Activated CD8-positive, alpha-beta T cell treated with anti-CD3 and anti-CD28 coated beads for 36 hours (primary cell): ENCODE measurements at regions of chr7 and their contacts with region 1.

Region 1: GRCh38 chr7:73606801-73607691 is 17.3 kb downstream of the MLXIPL start:
- DNase-seq: peak; percentile 74
- ATAC-seq: peak; percentile 94
- H3K4me3 Mint-ChIP-seq: no peak overlapping the region
- H3K27ac Mint-ChIP-seq: no peak overlapping the region
- H3K4me1 Mint-ChIP-seq: no peaks in the 10 kb centered on the region
- H3K27me3 Mint-ChIP-seq: peaks cover 25% of the 10 kb centered on the region
- CTCF ChIP-seq: peak; percentile 96

Region 2: DNA sequence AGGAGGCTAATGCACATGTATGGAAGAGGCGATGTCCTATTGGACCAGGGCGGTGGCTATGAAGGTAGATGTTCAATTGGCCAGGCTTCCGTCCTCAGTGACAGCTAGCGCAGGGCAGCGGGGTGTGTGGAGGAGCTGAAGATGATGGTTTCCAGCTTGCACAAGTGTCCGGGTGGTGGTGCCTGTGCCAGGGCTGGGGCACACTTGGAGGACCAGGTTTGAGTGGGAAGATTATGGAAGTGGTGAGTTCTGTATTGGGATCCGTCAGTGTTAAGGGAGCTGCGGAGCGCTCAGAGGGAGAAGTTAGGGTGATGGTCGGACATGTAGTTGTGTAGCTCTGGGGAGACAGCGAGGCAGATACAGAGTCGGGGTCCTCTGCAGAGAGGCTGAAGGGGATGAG is 20.1 kb before region 1 on chr7:
- CTCF ChIA-PET with region 1: interaction called, 14 read pairs
- POLR2A ChIA-PET with region 1: no interaction called
- intact Hi-C with region 1: no loop called
- DNase-seq: no peak
- ATAC-seq: no peak
- H3K4me3 Mint-ChIP-seq: no peak overlapping the region
- H3K27ac Mint-ChIP-seq: no peak overlapping the region
- H3K4me1 Mint-ChIP-seq: peaks cover 6% of the 10 kb centered on the region
- H3K27me3 Mint-ChIP-seq: no peaks in the 10 kb centered on the region
- CTCF ChIP-seq: no peak

Region 3: GRCh38 chr7:73638911-73639310 is 31.9 kb after region 1 on chr7:
- CTCF ChIA-PET with region 1: interaction called, 11 read pairs
- POLR2A ChIA-PET with region 1: no interaction called
- intact Hi-C with region 1: no loop called
- DNase-seq: no peak
- ATAC-seq: no peak
- H3K4me3 Mint-ChIP-seq: no peak overlapping the region
- H3K27ac Mint-ChIP-seq: no peak overlapping the region
- H3K4me1 Mint-ChIP-seq: peaks cover 5% of the 10 kb centered on the region
- H3K27me3 Mint-ChIP-seq: peaks cover 12% of the 10 kb centered on the region
- CTCF ChIP-seq: no peak

Region 4: DNA sequence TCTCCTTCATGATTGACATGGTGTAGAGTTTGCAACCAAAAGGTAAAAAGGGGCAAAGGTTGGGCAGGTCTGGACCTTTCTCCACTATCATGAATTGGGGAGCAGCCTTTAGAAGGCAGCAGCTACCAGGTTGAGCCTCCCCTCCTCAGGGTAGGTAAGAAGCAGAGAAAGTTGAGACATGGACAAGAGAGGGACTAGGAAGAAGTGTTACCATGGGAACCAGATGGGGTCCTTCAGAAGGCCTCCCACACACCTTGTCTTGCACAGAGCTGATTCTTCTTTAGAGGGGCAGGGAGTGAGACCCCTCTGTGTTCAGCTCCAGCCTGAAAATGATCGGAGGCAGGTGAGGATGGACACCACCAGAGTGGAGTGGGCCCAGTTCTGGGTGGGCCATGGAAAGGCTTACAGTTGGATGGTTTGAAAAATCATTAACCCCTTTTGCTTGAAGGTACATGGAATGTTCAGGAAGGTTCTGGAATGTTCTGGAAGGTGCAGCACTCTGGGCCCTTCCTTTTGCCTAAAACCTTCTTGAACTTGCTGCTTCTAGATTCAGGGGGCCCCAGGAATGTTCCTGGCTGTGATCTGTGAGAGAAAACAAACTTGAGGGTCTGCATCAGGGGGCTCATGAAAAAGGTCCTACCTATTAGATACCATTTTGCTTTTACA is 67.6 kb after region 1 on chr7:
- CTCF ChIA-PET with region 1: interaction called, 37 read pairs
- POLR2A ChIA-PET with region 1: no interaction called
- intact Hi-C with region 1: loop called (anchors 2 kb)
- DNase-seq: no peak
- ATAC-seq: no peak
- H3K4me3 Mint-ChIP-seq: no peak overlapping the region
- H3K27ac Mint-ChIP-seq: no peak overlapping the region
- H3K4me1 Mint-ChIP-seq: peaks cover 6% of the 10 kb centered on the region
- H3K27me3 Mint-ChIP-seq: peaks cover 2% of the 10 kb centered on the region
- CTCF ChIP-seq: no peak

Region 5: DNA sequence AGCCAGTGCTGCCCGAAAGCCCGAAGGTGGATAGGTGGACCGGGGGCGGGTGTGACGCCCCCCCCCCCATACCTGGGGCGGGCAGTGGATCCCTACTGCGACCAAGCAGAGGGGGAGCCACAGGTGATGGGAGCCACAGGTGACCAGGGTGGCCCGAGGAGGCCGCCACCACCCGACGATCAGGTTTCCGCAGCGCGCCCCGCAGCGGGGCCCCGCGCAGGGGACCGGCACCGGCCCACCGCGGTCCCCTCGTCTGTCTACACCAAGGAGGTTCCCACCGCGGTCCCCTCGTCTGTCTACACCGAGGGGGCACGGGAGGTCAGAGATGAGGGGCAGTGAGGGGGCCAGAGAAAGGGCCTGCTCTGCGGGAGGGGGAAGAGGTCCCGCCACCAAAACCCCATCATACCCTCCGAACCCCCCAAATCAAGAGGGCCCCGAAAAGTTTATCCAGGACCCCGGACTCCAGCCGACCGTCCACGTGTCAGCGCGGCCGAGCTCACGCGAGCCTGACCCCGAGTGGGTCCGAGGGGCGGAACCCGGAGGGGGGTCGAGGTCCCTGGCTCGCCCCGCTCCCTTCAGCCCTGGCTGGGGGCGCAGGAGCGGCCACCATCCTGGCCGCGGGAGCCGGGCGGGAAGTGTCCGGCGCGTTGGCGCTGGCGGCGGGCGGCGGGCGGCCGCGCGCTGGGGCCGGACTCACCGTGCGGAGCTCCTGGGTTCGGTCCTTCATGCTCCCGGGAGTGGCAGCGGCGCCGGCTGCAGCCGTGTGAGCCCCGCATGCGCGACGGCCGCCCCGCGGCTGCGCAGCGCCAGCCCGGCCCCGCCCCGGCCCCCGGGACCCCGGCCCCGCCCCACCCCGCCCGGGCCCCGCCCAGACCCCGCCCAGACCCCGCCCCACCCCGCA is 112.1 kb after region 1 on chr7 and contains the start of gene STX1A:
- CTCF ChIA-PET with region 1: interaction called, 53 read pairs
- POLR2A ChIA-PET with region 1: interaction called, 3 read pairs
- intact Hi-C with region 1: no loop called
- DNase-seq: peak; percentile 73
- ATAC-seq: peak; percentile 74
- H3K4me3 Mint-ChIP-seq: peak within 1 kb of the TSS; percentile 71
- H3K27ac Mint-ChIP-seq: peak within 1 kb of the TSS; percentile 47
- H3K4me1 Mint-ChIP-seq: peaks cover 35% of the 10 kb centered on the region
- H3K27me3 Mint-ChIP-seq: peaks cover 4% of the 10 kb centered on the region
- CTCF ChIP-seq: no peak
- total RNA-seq, gene STX1A: 11.4 to 11.5 TPM

Region 6: GRCh38 chr7:73738612-73739374 is 131.7 kb after region 1 on chr7 and contains the start of gene ABHD11:
- CTCF ChIA-PET with region 1: interaction called, 84 read pairs
- POLR2A ChIA-PET with region 1: interaction called, 8 read pairs
- intact Hi-C with region 1: no loop called
- DNase-seq: peak; percentile 98
- ATAC-seq: peak; percentile 83
- H3K4me3 Mint-ChIP-seq: peak within 1 kb of the TSS; percentile 93
- H3K27ac Mint-ChIP-seq: peak within 1 kb of the TSS; percentile 95
- H3K4me1 Mint-ChIP-seq: peaks cover 4% of the 10 kb centered on the region
- H3K27me3 Mint-ChIP-seq: no peaks in the 10 kb centered on the region
- CTCF ChIP-seq: no peak
- total RNA-seq, gene ABHD11: 19.0 to 21.5 TPM

Region 7: GRCh38 chr7:73770860-73771670 is 164.0 kb after region 1 on chr7:
- CTCF ChIA-PET with region 1: no interaction called
- POLR2A ChIA-PET with region 1: no interaction called
- intact Hi-C with region 1: no loop called
- DNase-seq: no peak
- ATAC-seq: no peak
- H3K4me3 Mint-ChIP-seq: no peak overlapping the region
- H3K27ac Mint-ChIP-seq: no peak overlapping the region
- H3K4me1 Mint-ChIP-seq: peaks cover 6% of the 10 kb centered on the region
- H3K27me3 Mint-ChIP-seq: peaks cover 36% of the 10 kb centered on the region
- CTCF ChIP-seq: no peak